A673 (cell line): ENCODE measurements at regions of chr4 and their contacts with region 1.

Region 1: GRCh38 chr4:31193521-31193920 is 473.4 kb downstream of the PCDH7 start:
- DNase-seq: peak; percentile 18
- H3K4me3 ChIP-seq: no peak overlapping the region
- H3K27ac ChIP-seq: no peak overlapping the region
- H3K4me1 ChIP-seq: peaks cover 17% of the 10 kb centered on the region
- H3K27me3 ChIP-seq: no peaks in the 10 kb centered on the region
- CTCF ChIP-seq: no peak

Region 2: DNA sequence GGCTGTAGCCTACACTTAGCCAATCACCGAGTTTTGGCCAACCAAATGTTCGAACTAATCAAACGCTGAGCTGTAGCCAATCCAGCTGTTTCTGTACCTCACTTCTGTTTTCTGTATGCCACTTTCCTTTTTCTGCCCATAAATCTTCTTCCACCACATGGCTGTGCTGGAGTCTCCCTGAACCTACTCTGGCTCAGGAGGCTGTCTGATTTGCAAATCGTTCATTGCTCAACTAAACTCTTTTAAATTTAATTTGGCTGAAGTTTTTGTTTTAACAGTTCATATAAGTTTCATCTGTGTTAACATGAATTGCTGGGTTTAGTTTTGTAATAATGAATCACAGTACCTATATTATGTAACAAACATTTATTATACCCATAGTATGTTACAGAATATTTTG is 634.0 kb before region 1 on chr4:
- CTCF ChIA-PET with region 1: no interaction called
- POLR2A ChIA-PET with region 1: no interaction called
- intact Hi-C with region 1: no loop called
- DNase-seq: no peak
- H3K4me3 ChIP-seq: no peak overlapping the region
- H3K27ac ChIP-seq: no peak overlapping the region
- H3K4me1 ChIP-seq: no peaks in the 10 kb centered on the region
- H3K27me3 ChIP-seq: no peaks in the 10 kb centered on the region
- CTCF ChIP-seq: no peak

Region 3: GRCh38 chr4:30912098-30912714 is 281.3 kb before region 1 on chr4:
- CTCF ChIA-PET with region 1: no interaction called
- POLR2A ChIA-PET with region 1: no interaction called
- intact Hi-C with region 1: no loop called
- DNase-seq: no peak
- H3K4me3 ChIP-seq: no peak overlapping the region
- H3K27ac ChIP-seq: peak overlapping the region; percentile 16
- H3K4me1 ChIP-seq: peaks cover 15% of the 10 kb centered on the region
- H3K27me3 ChIP-seq: no peaks in the 10 kb centered on the region
- CTCF ChIP-seq: no peak

Region 4: GRCh38 chr4:30972546-30972945 is 221.0 kb before region 1 on chr4:
- CTCF ChIA-PET with region 1: no interaction called
- POLR2A ChIA-PET with region 1: no interaction called
- intact Hi-C with region 1: loop called (anchors 10 kb)
- DNase-seq: no peak
- H3K4me3 ChIP-seq: no peak overlapping the region
- H3K27ac ChIP-seq: no peak overlapping the region
- H3K4me1 ChIP-seq: peaks cover 50% of the 10 kb centered on the region
- H3K27me3 ChIP-seq: no peaks in the 10 kb centered on the region
- CTCF ChIP-seq: no peak

Region 5: DNA sequence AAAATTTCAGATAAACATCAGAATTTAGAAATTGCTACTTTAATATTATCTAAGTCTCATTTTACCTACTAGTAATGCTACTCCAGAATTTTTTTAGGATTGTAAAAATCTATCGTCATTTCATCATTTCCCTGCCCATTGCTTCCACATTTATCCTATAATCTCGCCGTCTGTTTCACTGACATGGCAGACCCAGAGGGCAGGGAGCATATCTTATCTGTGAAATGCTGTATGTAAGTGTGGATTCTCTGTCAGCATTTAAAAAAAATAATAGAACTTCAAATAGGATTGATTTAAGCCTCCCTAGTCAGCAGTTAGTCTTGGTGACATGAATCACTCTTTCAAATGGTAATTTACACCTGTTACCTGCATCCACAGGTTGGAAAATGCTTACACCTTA is 159.0 kb before region 1 on chr4:
- CTCF ChIA-PET with region 1: no interaction called
- POLR2A ChIA-PET with region 1: no interaction called
- intact Hi-C with region 1: no loop called
- DNase-seq: no peak
- H3K4me3 ChIP-seq: no peak overlapping the region
- H3K27ac ChIP-seq: no peak overlapping the region
- H3K4me1 ChIP-seq: no peaks in the 10 kb centered on the region
- H3K27me3 ChIP-seq: no peaks in the 10 kb centered on the region
- CTCF ChIP-seq: no peak

Region 6: DNA sequence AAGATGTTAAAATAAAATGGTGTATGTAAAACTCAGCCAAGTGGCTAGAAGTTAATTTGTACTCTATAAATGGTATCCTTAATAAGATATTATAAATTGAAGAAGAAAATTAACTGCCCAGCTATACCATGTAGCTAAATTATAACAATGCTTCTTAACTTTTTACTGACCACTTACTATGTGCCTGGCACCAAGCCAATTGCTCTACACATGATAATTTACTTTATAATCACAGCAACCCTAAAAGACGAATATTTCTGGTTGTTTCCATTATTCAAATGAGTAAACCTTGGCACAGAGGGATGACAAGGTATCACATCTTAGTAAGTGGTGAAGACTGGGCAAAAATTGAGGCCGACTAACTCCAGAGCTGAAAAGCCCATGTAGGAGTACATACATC is 1033.2 kb after region 1 on chr4:
- CTCF ChIA-PET with region 1: no interaction called
- POLR2A ChIA-PET with region 1: no interaction called
- intact Hi-C with region 1: no loop called
- DNase-seq: no peak
- H3K4me3 ChIP-seq: no peak overlapping the region
- H3K27ac ChIP-seq: no peak overlapping the region
- H3K4me1 ChIP-seq: no peaks in the 10 kb centered on the region
- H3K27me3 ChIP-seq: no peaks in the 10 kb centered on the region
- CTCF ChIP-seq: no peak